PC-9 (cell line): ENCODE measurements at regions of chr2 and their contacts with region 1.

Region 1: DNA sequence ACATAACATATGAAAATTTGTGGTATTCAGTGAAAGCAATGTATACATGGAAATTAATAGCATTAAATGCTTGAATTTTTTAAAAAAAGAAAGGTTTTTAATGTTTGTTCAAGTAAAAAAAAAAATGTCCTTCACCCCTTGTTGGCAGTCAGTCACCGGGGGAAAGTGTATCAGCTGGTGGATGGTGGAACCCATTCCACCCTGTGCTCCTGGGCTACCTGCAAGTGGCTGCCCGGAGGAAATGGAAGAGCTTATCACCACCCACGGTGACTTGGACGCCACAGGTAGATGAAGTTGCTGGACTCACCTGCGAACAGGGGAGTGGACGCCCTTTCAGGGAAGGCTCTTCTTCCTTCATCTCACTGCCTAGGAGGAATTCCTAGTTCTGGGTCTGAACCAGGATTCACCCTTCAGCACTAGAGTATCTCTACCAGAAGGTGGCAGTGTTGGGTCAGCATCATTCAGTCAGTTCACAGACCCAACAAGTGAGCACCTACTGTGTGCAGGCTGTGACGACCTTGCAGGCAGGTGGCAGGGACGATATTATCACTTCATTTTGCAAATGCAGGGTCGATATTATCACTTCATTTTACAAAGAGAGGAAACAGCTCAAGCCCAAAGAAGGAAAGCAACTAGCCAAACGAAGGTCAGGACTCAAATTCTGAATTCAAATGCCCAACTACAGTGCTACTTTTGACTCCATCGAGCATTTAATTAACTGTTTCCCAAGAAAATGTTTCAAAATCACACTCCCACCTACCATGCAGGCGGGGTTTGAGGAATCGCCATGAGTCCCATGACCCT is 35.8 kb downstream of the CIB4 start:
- DNase-seq: peak; percentile 45 to 49
- H3K4me3 ChIP-seq: no peak overlapping the region
- H3K27ac ChIP-seq: no peak overlapping the region
- H3K4me1 ChIP-seq: peaks cover 25% of the 10 kb centered on the region
- H3K27me3 ChIP-seq: no peaks in the 10 kb centered on the region
- CTCF ChIP-seq: peak; percentile 99

Region 2: DNA sequence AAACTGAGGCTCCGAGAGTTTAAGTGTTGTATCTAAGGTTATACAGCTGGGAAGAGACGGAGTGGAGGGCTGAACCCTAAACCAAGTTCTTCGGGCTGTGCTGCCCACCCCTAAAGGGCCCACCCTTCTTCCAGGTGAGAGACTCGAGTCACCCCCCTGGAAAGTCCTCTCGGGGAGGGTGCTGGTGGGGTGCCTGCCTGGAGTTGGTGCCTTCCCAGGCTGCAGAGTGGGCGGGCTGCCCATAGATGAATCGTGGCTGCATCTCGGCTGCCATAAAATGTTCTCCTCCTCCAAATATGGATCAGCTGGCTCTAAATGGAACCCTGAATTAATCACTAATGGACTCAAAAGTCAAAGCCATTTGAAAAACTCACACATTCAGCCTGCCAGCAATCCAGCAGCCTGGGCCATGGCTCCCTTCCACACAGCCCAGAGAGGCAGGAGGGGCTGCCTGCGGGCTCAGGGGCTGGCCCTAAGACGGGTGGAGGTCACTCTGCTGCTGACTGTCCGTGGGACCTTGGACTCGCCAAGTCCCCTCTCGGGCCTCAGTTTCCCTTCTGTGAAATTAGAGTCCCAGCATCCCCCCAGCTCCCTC is 28.1 kb after region 1 on chr2:
- CTCF ChIA-PET with region 1: interaction called, 10 read pairs
- POLR2A ChIA-PET with region 1: no interaction called
- intact Hi-C with region 1: no loop called
- DNase-seq: no peak
- H3K4me3 ChIP-seq: no peak overlapping the region
- H3K27ac ChIP-seq: no peak overlapping the region
- H3K4me1 ChIP-seq: peaks cover 35% of the 10 kb centered on the region
- H3K27me3 ChIP-seq: no peaks in the 10 kb centered on the region
- CTCF ChIP-seq: no peak

Region 3: GRCh38 chr2:26640331-26640745 is 34.9 kb after region 1 on chr2:
- CTCF ChIA-PET with region 1: interaction called, 9 read pairs
- POLR2A ChIA-PET with region 1: no interaction called
- intact Hi-C with region 1: loop called (anchors 1 kb)
- DNase-seq: peak; percentile 85 to 90
- H3K4me3 ChIP-seq: no peak overlapping the region
- H3K27ac ChIP-seq: peak overlapping the region; percentile 51
- H3K4me1 ChIP-seq: peaks cover 35% of the 10 kb centered on the region
- H3K27me3 ChIP-seq: no peaks in the 10 kb centered on the region
- CTCF ChIP-seq: no peak

Region 4: DNA sequence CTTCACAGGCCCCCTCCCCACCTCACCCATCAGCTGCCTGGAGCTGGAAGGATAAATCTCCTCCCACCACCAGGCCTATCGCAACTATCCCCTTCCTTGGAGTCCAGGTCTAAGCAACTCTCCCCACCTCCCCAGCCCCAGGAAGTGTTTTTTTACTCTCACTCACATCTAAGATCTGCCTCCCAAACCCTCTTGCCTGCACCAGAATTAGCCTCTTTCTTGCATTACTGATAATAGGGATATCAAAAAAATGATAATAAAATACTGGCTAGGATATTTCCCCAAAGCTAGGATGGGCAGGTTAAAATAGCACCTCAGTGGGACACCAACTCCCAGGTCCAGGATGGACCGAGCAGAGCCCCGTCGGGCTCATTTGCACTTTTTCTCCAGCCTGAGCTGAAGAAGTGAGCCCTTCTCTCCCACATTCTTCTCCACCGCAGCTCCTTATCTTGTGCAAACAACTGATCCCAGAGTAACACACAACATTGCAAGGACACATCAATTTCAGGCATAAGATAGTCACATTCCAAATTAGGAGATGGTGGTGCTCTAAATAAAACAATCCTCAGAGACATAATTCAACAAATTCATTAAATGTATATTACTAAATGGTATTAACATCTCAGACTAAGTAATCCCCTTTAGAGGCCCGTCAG is 53.4 kb after region 1 on chr2:
- CTCF ChIA-PET with region 1: no interaction called
- POLR2A ChIA-PET with region 1: no interaction called
- intact Hi-C with region 1: no loop called
- DNase-seq: no peak
- H3K4me3 ChIP-seq: no peak overlapping the region
- H3K27ac ChIP-seq: no peak overlapping the region
- H3K4me1 ChIP-seq: 0 out of 2 replicates have a peak, but pooled peaks cover 4% of the 10 kb centered on the region
- H3K27me3 ChIP-seq: no peaks in the 10 kb centered on the region
- CTCF ChIP-seq: no peak

Region 5: GRCh38 chr2:26670171-26670570 is 64.8 kb after region 1 on chr2:
- CTCF ChIA-PET with region 1: no interaction called
- POLR2A ChIA-PET with region 1: interaction called, 7 read pairs
- intact Hi-C with region 1: loop called (anchors 2 kb)
- DNase-seq: no peak
- H3K4me3 ChIP-seq: no peak overlapping the region
- H3K27ac ChIP-seq: no peak overlapping the region
- H3K4me1 ChIP-seq: peaks cover 25% of the 10 kb centered on the region
- H3K27me3 ChIP-seq: no peaks in the 10 kb centered on the region; the same call in 1 of the 2 replicates
- CTCF ChIP-seq: no peak

Region 6: DNA sequence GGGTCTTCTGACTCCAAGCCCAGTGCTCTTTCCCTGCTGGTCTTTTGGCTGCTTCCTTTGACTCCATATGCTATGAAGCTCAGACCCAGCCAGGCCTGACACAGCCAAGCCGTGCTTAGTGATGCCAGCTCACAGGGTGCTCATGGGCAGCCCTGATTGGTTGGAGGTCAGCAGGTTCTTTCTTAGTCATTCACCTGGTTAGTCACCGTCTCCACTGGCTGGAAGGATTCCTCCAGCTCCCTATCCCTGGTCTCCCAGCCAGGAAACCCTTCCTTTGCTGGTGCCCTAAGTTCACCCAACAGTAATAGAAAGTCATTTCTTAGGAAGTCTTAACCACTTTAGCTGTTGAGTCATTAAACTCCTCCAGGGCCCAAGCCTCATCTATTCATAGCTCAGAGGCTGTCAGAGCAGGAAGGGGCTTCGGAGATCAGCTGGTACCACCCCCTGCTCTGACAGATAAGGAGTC is 91.0 kb after region 1 on chr2:
- CTCF ChIA-PET with region 1: interaction called, 9 read pairs
- POLR2A ChIA-PET with region 1: no interaction called
- intact Hi-C with region 1: loop called (anchors 5 kb)
- DNase-seq: peak; percentile 56 to 94
- H3K4me3 ChIP-seq: no peak overlapping the region
- H3K27ac ChIP-seq: peak overlapping the region; percentile 61
- H3K4me1 ChIP-seq: peaks cover 18% of the 10 kb centered on the region
- H3K27me3 ChIP-seq: no peaks in the 10 kb centered on the region
- CTCF ChIP-seq: no peak

Region 7: DNA sequence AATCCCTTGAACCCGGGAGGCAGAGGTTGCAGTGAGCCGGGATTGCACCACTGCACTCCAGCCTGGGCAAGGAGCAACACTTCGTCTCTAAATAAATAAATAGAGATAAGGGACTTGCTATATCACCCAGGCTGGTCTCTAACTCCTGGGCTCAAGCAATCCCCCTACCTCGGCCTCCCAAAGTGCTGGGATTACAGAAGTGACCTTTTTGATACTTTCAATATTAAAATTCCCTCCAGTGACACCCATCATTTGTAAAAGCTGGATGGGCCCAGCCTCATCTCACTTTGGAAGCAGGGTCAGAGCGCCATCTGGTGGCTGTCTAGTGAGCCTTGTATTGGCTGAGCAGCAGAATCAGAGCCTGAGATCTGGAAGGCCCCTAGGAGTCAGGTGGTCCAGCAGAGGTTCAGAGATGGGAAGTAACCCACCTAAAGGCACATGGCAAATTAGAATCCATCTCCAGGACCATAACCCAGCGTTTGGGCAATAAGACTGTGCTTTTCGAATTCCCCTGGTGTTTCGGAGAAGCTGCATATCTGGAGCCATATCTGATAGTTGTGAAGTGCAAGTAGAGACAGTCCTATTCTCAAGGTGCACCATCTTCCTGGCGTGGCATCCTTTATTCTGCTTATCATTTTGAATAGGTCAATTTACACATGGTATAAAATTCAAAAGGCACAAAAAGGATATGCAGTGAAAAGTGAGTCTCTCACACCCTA is 140.4 kb after region 1 on chr2:
- CTCF ChIA-PET with region 1: interaction called, 6 read pairs
- POLR2A ChIA-PET with region 1: no interaction called
- intact Hi-C with region 1: loop called (anchors 1 kb)
- DNase-seq: peak; percentile 63 to 71
- H3K4me3 ChIP-seq: no peak overlapping the region
- H3K27ac ChIP-seq: no peak overlapping the region
- H3K4me1 ChIP-seq: no peaks in the 10 kb centered on the region
- H3K27me3 ChIP-seq: no peaks in the 10 kb centered on the region
- CTCF ChIP-seq: peak; percentile 98

Region 8: DNA sequence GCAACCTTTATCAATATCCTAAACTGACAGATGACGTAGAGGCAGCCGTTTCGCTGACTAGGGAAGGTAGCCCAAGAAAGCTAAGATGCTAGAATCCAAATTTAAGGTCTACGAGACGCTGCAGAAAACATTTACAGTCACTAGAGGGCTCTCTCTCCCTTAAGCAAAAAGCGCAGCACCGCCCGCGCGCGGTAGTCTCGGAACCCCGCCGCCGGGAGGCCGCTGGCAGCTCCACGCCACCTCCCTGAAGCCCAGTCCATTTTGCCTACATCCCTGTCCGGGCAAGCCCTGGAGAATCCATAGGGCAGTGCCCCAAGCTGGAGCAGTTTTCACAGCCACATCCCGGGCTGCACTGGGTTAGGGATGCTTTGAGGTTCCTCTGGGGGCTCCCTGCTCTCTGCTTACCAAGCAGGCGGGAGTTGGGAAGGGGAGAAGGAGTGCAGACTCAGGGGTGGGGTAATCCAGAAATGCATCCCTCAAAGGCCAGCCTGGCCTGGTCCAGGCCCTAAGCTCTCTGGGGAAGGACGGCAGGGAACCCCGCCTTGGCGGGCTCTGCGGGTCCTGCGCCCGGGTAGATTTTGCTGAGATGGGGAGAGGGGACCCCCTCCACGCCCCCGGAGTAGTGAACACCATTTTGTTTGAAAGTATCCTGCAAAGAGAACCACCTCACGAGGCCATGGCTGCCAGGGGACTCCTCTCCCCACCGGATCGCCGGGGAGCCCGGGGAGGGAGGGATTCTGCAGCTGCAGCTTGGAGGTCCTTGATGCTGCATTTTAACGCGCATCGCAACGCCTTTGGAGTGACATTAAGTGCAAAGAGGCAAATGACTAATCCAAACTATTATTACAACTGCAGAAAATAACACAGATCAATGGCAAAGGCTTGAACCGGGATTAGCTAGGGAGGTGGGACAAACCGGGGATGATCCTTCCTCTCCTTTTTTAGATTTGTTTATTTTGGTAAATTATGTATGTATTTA is 241.2 kb after region 1 on chr2:
- CTCF ChIA-PET with region 1: no interaction called
- POLR2A ChIA-PET with region 1: no interaction called
- intact Hi-C with region 1: loop called (anchors 10 kb)
- DNase-seq: peak; percentile 57
- H3K4me3 ChIP-seq: no peak overlapping the region
- H3K27ac ChIP-seq: no peak overlapping the region
- H3K4me1 ChIP-seq: no peaks in the 10 kb centered on the region
- H3K27me3 ChIP-seq: peaks cover 25% of the 10 kb centered on the region
- CTCF ChIP-seq: peak; percentile 83